ENCODE measurements at regions of chr2 and their contacts with region 1.

Region 1: DNA sequence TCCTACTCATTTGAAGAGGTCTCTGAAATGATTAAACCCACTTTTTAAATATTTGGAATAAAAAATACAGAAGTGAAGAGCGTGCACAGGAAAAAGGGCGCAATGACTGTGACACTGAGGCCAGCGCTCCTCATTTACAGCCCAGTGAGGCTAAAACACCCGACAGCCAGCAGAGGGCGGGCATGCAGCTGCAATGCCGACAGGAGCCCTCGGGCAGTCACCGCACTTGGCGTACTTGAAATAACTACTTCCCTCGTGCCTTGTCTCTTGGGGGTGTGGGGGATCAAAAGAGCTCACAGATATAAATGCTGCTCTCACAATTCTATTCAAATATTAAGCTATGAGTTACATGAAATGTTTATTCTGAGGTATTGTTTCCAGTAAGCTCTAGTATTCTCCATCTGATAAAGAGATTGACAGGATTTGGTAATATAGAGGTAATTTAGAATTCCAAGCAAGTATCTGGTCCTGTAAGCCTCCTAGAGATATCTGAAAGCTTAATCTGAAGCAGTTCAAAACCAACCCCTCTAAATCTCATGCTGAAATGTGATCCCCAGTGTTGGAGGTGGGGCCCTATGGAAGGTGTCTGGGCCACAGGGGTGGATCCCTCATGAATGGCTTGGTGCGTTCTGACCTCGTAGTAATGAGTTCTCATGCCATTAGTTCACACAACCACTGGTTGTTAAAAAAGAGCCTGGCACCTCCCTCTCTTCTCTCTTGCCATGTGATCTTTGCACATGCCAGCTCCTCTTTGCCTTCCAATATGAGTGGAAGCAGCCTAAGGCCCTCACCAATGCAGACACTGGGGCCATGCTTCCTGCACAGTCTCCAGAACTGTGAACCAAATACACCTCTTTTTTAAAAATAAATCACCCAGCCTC is 93.6 kb downstream of the ZAP70 start:
- DNase-seq: peak; percentile 65 to 85
- ATAC-seq: peak; percentile 94 to 100 (median 97)
- H3K4me3 ChIP-seq: no peak overlapping the region
- H3K4me3 Mint-ChIP-seq: no peak overlapping the region
- H3K27ac ChIP-seq: no peak overlapping the region
- H3K27ac Mint-ChIP-seq: no peak overlapping the region
- H3K4me1 ChIP-seq: no peaks in the 10 kb centered on the region
- H3K4me1 Mint-ChIP-seq: no peaks in the 10 kb centered on the region
- H3K27me3 ChIP-seq: no peaks in the 10 kb centered on the region
- H3K27me3 Mint-ChIP-seq: no peaks in the 10 kb centered on the region
- CTCF ChIP-seq: peak; percentile 95

Region 2: DNA sequence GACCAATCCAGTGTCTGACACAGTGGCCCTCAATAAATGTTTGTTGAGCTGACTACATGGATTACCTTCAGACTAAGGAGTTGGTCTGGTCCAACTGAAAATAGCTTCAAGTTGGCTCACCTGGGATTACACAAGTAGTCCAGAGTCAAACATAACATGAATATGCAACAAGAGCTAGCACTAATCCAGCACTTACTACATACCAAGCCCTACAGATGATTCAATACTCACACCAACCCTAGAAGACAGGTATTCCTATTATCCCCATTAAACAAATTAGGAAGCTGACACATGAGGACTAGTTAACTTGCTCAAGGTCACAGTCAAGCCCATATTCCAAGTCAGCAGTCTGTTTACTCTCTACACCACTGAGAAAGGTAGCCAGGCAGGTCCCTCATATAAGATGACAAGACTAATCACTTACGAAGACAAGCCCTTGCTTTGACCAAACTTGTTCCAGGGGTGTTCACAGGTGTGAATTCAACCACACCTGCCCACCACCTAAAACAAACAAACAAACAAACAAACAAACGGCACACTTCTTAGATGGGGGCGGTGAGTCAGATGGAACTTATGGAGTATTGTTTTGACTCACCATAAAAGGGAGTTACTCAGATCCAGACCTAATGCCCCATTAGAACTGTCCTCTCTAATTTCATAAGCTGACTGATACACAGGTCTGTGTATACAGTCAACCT is 159.7 kb after region 1 on chr2:
- intact Hi-C with region 1: no loop called
- DNase-seq: no peak
- ATAC-seq: peak in 1 of 3 donors; percentile 13
- H3K4me3 ChIP-seq: no peak overlapping the region
- H3K4me3 Mint-ChIP-seq: no peak overlapping the region
- H3K27ac ChIP-seq: no peak overlapping the region
- H3K27ac Mint-ChIP-seq: peak overlapping the region; percentile 39 to 73
- H3K4me1 ChIP-seq: no peaks in the 10 kb centered on the region
- H3K4me1 Mint-ChIP-seq: peaks cover 78 to 79% of the 10 kb centered on the region in 2 donors
- H3K27me3 ChIP-seq: no peaks in the 10 kb centered on the region
- H3K27me3 Mint-ChIP-seq: no peaks in the 10 kb centered on the region
- CTCF ChIP-seq: no peak

Region 3: GRCh38 chr2:98253461-98254070 is 446.6 kb after region 1 on chr2:
- intact Hi-C with region 1: loop called (anchors 5 kb)
- DNase-seq: no peak
- ATAC-seq: no peak
- H3K4me3 ChIP-seq: no peak overlapping the region
- H3K4me3 Mint-ChIP-seq: no peak overlapping the region
- H3K27ac ChIP-seq: no peak overlapping the region
- H3K27ac Mint-ChIP-seq: no peak overlapping the region
- H3K4me1 ChIP-seq: peaks cover 4% of the 10 kb centered on the region
- H3K4me1 Mint-ChIP-seq: peaks cover 6% of the 10 kb centered on the region in 2 donors
- H3K27me3 ChIP-seq: peaks cover 2% of the 10 kb centered on the region
- H3K27me3 Mint-ChIP-seq: peaks cover 17 to 28% of the 10 kb centered on the region in 2 donors
- CTCF ChIP-seq: no peak

Region 4: DNA sequence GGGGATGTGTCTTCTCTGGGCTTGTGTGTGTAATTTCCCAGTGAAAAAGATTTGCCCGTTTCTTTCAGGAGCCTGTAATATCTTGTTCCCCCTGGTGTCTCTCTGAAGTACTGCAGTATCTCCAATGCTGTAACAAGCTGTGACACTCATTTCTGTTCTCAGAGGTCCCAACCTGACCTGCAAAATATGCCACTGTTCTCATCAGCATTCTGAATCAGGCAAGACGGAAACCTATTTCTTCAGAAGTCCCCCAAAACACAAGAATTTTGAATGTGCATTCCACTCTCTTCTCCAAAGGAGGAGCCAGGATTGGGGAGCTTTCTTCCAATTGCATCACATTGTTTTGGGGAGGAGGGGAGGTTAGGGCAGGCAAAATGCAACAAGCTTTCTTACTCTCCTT is 462.3 kb after region 1 on chr2:
- intact Hi-C with region 1: loop called (anchors 1 kb)
- DNase-seq: peak in 1 of 2 donors; percentile 43
- ATAC-seq: peak in 1 of 3 donors; percentile 57
- H3K4me3 ChIP-seq: no peak overlapping the region
- H3K4me3 Mint-ChIP-seq: no peak overlapping the region
- H3K27ac ChIP-seq: no peak overlapping the region
- H3K27ac Mint-ChIP-seq: no peak overlapping the region
- H3K4me1 ChIP-seq: no peaks in the 10 kb centered on the region
- H3K4me1 Mint-ChIP-seq: no peaks in the 10 kb centered on the region
- H3K27me3 ChIP-seq: no peaks in the 10 kb centered on the region
- H3K27me3 Mint-ChIP-seq: peaks cover 4 to 57% of the 10 kb centered on the region in 2 donors
- CTCF ChIP-seq: peak; percentile 31

Measured in natural killer cell (primary cell).